Esophagus squamous epithelium (tissue), 5 donors: ENCODE measurements at regions of chr11 and their contacts with region 1.

Region 1: GRCh38 chr11:64894070-64894796 is 15.8 kb upstream of the EHD1 start:
- DNase-seq: no peak
- H3K4me3 ChIP-seq: no peak overlapping the region
- H3K27ac ChIP-seq: no peak overlapping the region
- H3K4me1 ChIP-seq: peaks cover 0 to 14% (median 0%) of the 10 kb centered on the region in 3 donors
- H3K27me3 ChIP-seq: no peaks in the 10 kb centered on the region
- CTCF ChIP-seq: peak; percentile 85 to 93 (median 86)
- POLR2A ChIP-seq: no peak

Region 2: GRCh38 chr11:64846998-64847666 is 47.1 kb before region 1 on chr11:
- intact Hi-C with region 1: loop called (anchors 5 kb)
- DNase-seq: peak; percentile 46
- H3K4me3 ChIP-seq: no peak overlapping the region
- H3K27ac ChIP-seq: peak overlapping the region in 2 of 4 donors; percentile 22 to 32
- H3K4me1 ChIP-seq: peaks cover 31 to 88% (median 38%) of the 10 kb centered on the region in 3 donors
- H3K27me3 ChIP-seq: no peaks in the 10 kb centered on the region
- CTCF ChIP-seq: peak; percentile 93 to 99 (median 97)
- POLR2A ChIP-seq: no peak

Region 3: DNA sequence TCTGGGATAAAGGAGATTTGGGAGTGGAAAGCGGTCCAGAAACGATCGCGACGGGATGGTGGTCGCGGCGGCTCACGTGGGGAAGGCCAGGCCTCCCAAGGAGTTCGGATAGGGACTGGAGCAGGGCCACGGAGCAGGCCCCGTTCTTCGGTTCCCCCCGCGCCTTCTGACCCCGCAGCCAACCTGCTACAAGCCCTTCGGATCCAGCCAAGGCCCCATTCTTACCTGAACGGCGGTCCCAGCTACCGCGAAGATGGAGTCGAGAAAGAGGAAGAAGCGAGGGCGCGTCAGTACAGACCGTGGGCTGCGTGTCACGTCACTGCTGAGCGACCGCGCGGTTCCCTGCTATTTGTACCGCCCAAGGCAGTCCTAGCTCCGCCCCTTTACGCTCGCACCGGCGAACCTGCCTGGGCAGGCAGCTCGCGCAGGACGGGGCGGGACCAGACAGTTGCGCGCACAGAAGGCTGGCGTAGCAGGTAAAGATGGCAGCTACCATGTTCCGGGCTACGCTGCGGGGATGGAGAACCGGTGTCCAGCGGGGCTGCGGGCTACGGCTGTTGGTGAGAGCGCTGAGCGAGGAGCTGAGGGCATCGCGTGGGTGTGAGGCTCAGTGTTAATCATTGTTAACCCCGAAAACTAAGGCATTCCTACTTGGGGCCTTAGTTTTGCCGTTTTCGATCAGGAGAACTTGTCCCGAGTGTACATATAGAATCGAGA is 227.8 kb after region 1 on chr11 and contains the starts of genes FAU and MRPL49:
- intact Hi-C with region 1: no loop called
- DNase-seq: peak; percentile 95
- H3K4me3 ChIP-seq: peak within 1 kb of the TSS; percentile 68 to 90 (median 84)
- H3K27ac ChIP-seq: peak within 1 kb of the TSS; percentile 96 to 98 (median 97)
- H3K4me1 ChIP-seq: peaks cover 10 to 63% (median 19%) of the 10 kb centered on the region in 3 donors
- H3K27me3 ChIP-seq: no peaks in the 10 kb centered on the region
- CTCF ChIP-seq: peak in 2 of 6 experiments; percentile 9 to 54
- POLR2A ChIP-seq: peak in 3 of 4 donors; percentile 88 to 94 (median 89)
- total RNA-seq, gene FAU: 436 to 777 (median 528) TPM
- total RNA-seq, gene MRPL49: 68.1 to 76.2 (median 72.0) TPM

Region 4: DNA sequence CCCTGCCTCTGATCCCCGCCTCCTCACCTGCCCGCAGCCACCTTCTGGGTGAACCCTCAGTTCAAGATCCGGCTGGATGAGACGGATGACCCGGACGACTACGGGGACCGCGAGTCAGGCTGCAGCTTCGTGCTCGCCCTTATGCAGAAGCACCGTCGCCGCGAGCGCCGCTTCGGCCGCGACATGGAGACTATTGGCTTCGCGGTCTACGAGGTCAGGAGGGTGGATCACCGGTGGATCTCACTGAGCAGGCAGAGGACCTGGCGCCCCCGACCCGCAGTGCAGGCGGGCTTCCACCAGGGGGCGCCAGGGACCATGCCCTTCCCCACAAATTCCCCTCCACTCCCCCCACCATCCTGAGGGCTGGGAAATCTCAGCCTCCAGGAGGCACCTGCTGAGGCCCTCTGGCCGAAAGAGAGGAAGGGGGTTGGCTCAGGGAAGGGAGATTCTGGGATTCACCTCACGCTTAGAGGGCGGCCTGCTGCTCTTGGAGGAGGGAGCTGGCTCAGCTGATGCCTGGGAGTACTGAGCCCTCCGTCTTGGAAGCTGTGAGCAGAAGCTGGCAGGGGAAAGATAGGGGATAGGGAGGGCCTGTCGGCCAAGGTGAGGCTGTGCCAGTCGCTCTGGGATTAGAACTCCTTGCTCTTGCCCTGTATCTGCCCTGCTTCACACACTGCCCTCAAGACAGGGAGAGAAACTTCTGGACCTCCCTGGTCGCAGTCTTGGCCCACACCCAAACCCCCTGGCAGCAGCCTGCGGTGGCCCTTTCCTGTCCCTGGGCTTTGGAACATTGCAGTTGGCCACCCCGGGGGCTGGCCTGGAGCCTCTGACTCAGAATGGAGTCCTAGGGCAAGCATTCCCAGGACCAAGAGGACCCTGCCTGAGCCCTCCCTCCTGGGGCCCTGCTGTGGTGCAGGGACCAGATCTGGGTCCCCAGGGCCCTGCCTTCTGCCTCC is 310.7 kb after region 1 on chr11:
- intact Hi-C with region 1: no loop called
- DNase-seq: no peak
- H3K4me3 ChIP-seq: no peak overlapping the region
- H3K27ac ChIP-seq: no peak overlapping the region
- H3K4me1 ChIP-seq: no peaks in the 10 kb centered on the region
- H3K27me3 ChIP-seq: no peaks in the 10 kb centered on the region
- CTCF ChIP-seq: peak; percentile 67 to 85 (median 82)
- POLR2A ChIP-seq: no peak